ENCODE measurements at regions of chr20 and their contacts with region 1.

Region 1: GRCh38 chr20:53124803-53125202 is 152.6 kb downstream of the TSHZ2 start:
- DNase-seq: no peak
- ATAC-seq: no peak
- H3K4me3 ChIP-seq: no peak overlapping the region
- H3K27ac ChIP-seq: no peak overlapping the region
- H3K4me1 ChIP-seq: no peaks in the 10 kb centered on the region
- H3K27me3 ChIP-seq: peaks cover 2% of the 10 kb centered on the region
- CTCF ChIP-seq: no peak

Region 2: DNA sequence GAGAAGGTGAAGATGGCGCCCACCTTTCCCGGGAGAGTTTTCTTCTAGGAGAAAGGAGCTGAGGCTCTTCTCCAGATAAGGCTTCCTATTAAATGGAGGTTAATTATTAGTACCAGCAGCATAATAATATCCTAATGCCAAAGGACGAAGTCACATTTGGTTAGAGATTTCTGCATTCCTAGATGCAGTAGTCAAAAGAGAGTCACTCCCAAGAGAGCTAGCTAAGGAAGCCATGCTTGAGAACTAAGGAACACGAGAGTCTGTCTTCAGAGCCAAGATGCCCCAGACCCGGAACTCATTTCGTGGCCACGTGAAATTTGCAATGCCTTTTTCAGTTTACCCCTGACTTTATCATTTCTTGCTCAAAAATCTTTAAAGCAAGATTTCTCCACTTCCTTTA is 19.9 kb before region 1 on chr20:
- CTCF ChIA-PET with region 1: no interaction called
- POLR2A ChIA-PET with region 1: no interaction called
- in situ Hi-C with region 1: no loop called
- intact Hi-C with region 1: loop called (anchors 1 kb)
- DNase-seq: no peak
- ATAC-seq: no peak
- H3K4me3 ChIP-seq: no peak overlapping the region
- H3K27ac ChIP-seq: no peak overlapping the region
- H3K4me1 ChIP-seq: no peaks in the 10 kb centered on the region
- H3K27me3 ChIP-seq: peaks cover 3% of the 10 kb centered on the region; the same call in 1 of the 2 replicates
- CTCF ChIP-seq: no peak

Region 3: DNA sequence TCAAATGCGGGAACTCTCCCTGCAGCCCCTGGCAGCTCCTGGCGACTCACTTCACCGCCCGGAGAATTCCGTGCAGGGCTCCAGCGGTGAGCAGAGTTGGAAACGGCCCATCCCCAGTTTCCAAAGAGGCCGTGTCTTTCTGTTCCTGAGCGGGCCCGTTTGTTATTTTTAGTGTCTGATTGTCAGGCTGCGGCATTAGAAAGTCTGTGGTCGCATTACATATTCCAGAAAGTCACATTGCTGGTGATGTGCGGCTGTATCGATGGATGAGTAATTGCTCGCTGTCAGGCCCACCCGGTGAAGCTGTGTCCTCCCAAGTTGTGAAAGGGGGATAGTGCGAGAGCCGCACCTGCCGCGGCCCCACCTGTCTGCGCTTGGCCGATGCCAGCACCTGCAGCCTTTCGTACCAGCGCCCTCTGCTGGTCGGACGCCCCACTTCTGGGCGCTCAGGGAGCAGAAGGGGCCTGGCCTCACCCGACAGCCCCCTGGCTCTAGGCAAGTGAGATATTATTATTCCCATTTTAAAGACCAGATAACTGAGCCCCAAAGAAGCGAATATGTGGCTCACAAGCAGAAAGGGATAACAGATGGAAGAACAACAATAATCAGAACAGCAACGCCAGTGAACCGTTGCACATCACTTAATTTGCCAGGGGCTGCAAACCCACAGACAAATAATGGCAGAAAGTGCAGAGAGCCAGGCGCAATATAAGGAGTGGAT is 92.2 kb after region 1 on chr20:
- CTCF ChIA-PET with region 1: no interaction called
- POLR2A ChIA-PET with region 1: no interaction called
- in situ Hi-C with region 1: no loop called
- intact Hi-C with region 1: no loop called
- DNase-seq: peak; percentile 17
- ATAC-seq: peak; percentile 85
- H3K4me3 ChIP-seq: no peak overlapping the region
- H3K27ac ChIP-seq: no peak overlapping the region
- H3K4me1 ChIP-seq: no peaks in the 10 kb centered on the region
- H3K27me3 ChIP-seq: peaks cover 5% of the 10 kb centered on the region; the same call in 1 of the 2 replicates
- CTCF ChIP-seq: peak; percentile 96